ENCODE measurements at regions of chr11 and their contacts with region 1.

Region 1: DNA sequence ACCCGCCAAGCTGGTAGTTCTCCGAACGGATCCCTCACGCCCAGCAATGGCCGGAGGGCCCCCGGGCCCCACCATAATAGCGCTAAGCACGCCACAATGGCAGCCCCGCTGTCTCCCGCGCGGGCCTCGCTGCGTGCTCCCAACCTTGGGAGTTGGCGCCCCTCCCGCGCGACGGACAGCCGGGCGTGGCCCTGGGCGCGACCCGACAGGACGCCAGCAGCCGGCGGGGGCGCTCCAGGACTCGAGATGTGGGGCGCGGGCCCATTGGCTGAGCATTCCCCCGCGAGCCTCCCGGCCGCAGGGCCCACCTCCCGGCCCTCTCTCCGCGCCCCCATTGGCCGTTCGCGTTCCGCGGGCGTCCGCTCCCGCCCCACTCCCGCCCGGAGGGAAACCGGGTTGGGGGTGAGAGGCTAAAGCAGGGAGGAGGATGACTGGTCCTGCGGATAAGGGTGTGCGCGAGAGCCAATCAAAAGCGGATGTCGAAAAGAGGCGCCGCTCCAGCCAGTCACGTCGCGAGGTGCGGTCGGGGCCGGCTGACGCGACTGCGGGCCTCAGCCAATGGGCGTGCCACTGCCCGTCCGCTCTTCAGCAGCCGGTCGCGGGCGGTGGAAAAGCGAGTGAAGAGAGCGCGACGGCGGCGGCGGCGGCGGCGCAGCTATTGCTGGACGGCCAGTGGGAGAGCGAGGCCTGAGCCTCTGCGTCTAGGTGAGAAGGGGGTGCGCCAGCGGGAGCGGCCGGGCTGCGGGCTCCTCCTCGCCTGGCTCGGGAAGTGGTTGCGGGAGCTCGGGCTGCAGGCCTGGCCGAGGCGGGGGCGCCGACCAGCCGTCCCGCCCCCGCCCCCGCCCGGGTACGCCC is at the start of gene FAR1:
- DNase-seq: peak; percentile 96 to 100 (median 98)

Region 2: DNA sequence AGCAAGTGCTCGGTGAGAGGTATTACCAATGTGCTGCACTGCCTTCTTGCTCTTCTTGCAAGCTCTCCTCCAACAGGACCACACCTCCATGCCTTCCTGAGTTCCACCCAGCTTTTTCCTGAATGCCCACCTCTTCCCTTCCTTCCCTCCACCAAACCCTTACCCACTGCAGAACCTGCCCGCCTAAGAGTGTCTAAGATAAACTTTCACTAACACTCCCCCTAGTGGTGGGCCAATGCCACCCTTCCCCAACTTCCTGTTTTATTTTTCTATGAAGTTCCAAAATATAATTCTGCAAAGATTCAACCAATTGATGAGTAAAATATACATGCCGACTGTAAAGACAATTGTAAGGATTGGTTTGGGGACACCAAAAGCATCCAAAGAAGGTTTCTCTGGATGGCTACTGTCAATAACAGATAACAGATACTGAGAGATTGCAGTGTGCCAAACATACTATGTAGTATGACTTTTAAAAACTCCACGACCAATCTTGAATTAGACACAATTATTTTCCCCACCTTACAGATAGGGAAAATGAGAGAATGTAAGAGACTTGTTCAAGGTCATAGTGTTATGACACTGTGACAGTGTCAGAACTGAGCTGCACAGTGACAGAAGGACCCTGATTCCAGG is 429.3 kb before region 1 on chr11:
- intact Hi-C with region 1: no loop called
- DNase-seq: peak in 2 of 10 donors; percentile 29 to 43

Region 3: DNA sequence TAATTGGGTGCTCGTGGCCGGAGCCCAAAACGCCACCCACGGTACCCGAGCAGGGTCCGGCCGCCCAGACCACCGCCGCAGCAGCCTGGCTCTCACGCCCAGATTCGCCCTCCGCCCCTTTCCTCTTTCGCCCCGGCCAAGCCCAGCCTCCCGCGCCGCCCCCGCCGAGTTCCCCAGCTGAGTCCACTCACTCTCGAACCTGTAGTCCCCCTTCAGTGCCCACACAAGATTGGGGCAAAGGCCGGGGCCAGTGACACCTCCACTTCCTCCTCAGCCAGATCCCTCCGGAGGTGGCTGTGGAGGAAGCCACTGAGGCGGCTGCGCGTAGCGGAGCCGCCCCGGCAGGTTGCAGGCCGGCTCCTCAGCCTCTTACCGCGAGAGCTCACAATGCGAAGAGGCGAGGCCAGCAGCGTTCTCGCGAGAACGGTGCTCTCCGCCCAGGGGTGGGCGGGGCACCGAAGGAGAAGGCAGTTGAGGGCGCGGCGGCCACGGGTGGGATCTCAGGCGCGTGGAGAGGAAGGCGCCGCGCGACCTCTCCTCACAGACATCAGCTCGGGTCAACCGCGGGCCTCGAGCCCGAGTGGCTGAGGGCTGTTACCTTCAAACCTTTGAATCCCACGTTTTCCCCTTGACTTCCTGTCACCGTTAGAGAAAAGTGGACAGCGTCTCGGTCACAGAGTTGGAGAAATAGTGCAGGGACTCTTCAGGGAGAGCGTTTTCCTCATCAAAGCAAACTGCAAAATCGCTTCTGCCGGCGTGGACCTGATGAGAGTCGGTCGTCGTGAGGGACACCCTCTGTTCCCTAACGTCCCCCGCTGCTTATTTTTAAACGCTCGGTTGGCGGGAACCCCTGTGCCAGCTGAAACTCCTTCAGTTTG is 205.2 kb before region 1 on chr11 and contains the start of gene BTBD10:
- intact Hi-C with region 1: loop called (anchors 5 kb)
- DNase-seq: peak; percentile 76 to 99 (median 88)

Region 4: DNA sequence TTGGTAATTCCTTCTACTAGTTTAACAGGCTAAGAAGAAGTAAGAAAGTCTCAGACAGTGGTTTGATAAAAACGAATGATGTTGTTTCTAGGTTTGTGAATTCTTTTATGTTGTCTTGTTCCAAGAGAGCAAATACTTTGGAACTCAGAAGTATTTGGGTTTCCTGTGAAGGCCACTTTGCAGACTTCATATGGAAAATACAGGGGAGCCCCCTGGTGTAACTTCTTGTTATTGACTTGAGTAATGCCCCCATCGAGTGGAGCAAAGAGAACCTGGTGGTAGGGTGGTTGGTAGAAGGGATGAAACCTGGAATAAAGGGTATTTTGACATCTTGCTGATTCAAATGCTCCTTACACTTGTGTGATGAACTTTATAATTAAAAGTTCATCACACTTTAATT is 132.5 kb before region 1 on chr11:
- intact Hi-C with region 1: no loop called
- DNase-seq: no peak

Region 5: DNA sequence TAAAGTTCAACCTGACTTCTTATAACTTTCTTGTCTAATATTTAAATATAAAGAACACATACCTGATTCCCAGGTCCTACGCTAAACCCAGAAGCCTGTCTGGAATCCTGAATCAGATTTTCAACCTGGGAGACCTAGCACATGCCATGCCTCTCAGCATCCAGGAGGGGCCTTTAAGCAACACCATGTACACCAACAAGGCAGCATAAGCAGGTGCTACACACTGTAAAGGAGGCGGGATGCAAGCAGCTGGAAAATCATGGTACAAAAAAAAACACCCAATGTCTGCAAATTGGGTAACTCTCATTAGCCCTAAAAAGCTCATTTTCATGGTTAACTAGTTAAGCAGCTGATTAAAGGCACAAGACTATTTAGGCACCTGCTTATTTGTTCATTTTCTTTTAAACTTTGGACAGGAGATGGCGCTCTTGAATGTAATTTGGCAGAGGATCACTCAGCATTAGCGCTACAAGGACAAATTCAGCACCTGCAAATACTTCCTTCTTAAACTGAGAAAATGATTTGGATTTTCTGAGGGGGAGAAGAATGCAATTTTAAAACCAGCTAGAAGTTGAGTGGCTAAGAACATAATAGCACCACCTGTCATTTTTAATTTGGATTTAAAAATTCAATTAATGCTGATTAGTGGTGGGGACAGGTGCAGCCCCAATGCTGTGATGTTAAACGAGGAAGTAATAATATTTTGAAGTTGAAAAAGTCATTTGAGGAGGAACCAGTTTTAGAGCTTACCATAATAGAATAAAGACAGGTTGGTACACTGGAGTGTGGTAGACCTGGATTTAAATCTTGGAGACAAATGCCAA is 104.1 kb after region 1 on chr11:
- intact Hi-C with region 1: loop called (anchors 5 kb)
- DNase-seq: no peak

Region 6: DNA sequence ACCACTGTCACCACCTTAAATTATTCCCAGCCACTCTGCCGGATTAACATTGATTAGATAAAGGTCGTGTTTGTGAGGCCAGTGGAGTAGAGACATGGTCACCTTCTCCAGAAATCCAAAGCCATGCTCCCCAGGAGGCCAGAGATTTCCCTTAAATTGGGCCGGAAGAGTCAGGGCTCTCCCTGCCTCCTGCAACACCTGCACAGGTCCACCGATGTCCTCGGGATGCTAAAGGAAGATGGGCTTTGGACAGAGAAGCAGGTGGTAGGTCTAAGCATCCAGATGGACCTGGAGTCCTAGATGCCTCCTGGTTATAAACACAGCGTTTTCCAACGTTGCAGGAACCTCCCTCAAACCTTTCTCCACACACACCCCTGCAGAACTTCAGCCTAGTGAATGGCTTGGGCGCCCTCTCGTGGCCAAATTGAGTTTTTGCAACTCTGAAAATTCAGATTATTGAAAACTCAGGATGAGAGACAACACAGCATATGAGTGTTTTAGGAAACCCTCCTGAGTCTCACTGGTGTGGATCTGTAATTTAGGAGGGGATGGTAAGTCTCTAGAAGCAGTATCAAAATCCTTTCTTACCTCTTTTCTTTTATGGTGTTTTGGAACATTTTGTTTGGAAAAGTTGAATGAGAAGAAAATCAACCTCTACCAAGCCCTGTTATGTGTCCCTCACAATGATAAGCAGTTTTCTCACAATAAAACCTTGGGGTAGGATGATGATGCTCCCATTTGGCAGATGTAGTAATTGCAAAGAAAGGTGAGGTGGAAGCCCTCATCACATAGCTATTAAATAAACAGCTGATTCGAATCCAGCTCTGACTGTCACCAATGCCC is 581.0 kb after region 1 on chr11:
- intact Hi-C with region 1: loop called (anchors 2 kb)
- DNase-seq: peak in 8 of 10 donors; percentile 39 to 95 (median 70)

Measured in posterior cingulate gyrus (tissue), 11 donors.